Heart left ventricle (tissue), 16 donors: ENCODE measurements at regions of chr17 and their contacts with region 1.

Region 1: GRCh38 chr17:64178011-64178825 is 48.3 kb upstream of the ERN1 start:
- DNase-seq: no peak
- ATAC-seq: no peak
- H3K4me3 ChIP-seq: no peak overlapping the region
- H3K27ac ChIP-seq: peak overlapping the region in 4 of 12 donors; percentile 3 to 86 (median 74)
- H3K4me1 ChIP-seq: peaks cover 0 to 70% (median 33%) of the 10 kb centered on the region in 12 donors
- H3K27me3 ChIP-seq: no peaks in the 10 kb centered on the region
- CTCF ChIP-seq: no peak
- POLR2A ChIP-seq: no peak

Region 2: GRCh38 chr17:64133546-64134215 is 44.5 kb before region 1 on chr17:
- intact Hi-C with region 1: no loop called
- DNase-seq: no peak
- ATAC-seq: no peak
- H3K4me3 ChIP-seq: no peak overlapping the region
- H3K27ac ChIP-seq: no peak overlapping the region
- H3K4me1 ChIP-seq: peaks cover 0 to 23% (median 15%) of the 10 kb centered on the region in 12 donors
- H3K27me3 ChIP-seq: no peaks in the 10 kb centered on the region
- CTCF ChIP-seq: peak; percentile 56 to 81 (median 72)
- POLR2A ChIP-seq: no peak

Region 3: DNA sequence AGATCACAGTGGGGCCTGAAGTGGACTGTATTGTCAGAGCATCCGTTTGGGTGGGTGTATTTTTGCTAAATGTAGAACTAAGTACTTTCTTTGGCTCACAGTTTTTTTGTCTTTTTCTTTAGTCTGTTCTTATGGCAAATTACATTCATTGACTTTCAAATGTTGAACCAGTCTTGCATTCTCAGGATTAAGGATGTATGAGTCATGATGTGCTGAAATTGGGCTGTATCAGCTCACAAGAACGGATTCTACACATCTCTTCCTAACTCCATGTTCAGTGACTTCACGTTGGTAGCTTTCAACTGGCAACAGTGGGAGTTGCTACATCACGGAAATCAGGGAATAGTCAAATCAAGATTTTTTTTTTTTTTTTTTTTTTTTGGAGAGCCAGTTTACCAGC is 18.4 kb after region 1 on chr17:
- intact Hi-C with region 1: no loop called
- DNase-seq: no peak
- ATAC-seq: no peak
- H3K4me3 ChIP-seq: no peak overlapping the region
- H3K27ac ChIP-seq: no peak overlapping the region
- H3K4me1 ChIP-seq: peaks cover 0 to 44% (median 19%) of the 10 kb centered on the region in 12 donors
- H3K27me3 ChIP-seq: no peaks in the 10 kb centered on the region
- CTCF ChIP-seq: no peak
- POLR2A ChIP-seq: no peak

Region 4: DNA sequence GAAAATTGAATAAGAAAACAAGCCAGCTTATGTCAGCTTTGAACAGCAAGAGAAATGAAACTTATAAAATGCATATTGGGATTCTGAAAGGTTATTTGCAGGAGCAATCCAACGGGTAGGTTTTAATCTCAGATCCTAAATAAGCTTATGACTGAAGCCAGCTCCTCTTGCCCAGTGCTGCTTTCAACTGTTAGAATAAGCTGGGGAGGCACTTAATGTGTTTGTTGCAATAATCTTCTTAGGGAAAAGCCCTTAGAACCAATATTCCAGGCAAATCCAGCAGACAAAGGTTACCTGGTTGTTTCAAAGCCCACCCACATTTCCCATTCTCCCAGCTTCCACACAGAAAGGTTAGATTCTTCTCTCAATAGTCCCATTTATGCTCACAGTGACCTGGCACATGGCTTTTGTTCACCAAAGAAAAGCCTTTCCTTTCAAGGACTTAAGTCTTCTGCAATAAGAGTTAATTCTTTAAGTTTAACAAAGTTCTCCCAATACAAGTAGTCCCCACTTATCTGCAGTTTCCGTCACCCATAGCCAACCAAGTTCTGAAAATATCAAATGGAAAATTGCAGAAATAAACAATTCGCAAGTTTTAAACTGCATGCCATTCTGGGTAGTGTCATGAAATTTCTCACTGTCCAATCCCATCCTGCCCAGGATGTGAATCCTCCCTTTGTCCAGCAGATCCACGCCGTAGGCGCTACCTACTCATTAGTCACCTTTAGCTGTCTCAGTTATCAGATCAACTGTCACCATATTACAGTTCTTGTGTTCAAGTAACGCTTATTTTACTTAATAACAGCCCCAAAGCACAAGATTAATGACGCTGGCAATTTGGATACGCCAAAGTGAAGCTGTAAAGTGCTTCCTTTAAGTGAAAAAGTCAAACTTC is 78.9 kb after region 1 on chr17:
- intact Hi-C with region 1: loop called in 1 of 10 experiments (anchors 2 kb)
- DNase-seq: no peak
- ATAC-seq: no peak
- H3K4me3 ChIP-seq: no peak overlapping the region
- H3K27ac ChIP-seq: peak overlapping the region in 1 of 12 donors; percentile 22
- H3K4me1 ChIP-seq: peaks cover 4 to 70% (median 45%) of the 10 kb centered on the region in 12 donors
- H3K27me3 ChIP-seq: no peaks in the 10 kb centered on the region
- CTCF ChIP-seq: no peak
- POLR2A ChIP-seq: no peak